ENCODE measurements at regions of chr6 and their contacts with region 1.

Region 1: GRCh38 chr6:88975369-88975768 is 12.0 kb upstream of the RNGTT start:
- DNase-seq: no peak
- H3K4me3 ChIP-seq: no peak overlapping the region
- H3K27ac ChIP-seq: no peak overlapping the region
- H3K4me1 ChIP-seq: no peaks in the 10 kb centered on the region
- H3K27me3 ChIP-seq: no peaks in the 10 kb centered on the region
- CTCF ChIP-seq: no peak

Region 2: DNA sequence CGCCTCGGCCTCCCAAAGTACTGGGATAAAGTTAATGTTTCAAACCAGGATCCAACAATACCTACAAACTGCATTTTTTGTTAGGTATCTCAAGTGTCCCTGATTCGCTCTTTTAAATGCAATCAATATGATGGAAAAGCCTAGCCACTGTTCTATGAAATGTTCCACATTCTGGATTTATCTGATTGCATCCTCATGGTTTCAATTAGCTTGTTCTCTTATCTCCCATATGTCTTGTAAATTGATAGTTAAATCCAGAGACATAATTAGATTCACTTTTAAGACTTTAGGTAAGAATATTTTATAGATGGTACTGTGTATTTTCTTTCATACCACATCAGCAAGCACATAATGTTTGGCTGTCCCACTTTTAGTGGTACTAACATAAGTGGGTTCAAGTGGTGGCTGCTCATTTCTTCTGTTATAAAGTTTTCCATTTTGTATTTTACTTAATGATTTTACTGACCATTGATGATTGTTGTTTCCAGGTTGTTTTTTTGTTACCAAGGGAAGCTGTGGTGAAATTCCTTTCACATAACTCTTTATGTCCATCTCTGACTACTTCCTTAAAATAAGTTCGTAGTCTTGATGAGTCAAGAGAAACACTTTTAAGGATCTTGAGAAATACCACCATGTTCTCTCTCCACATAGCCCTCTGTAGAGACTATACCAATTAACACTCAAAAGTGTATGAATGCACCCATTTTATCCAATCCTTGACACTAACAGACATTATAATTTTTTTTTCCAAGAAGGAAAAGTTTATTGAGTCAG is 52.4 kb before region 1 on chr6:
- intact Hi-C with region 1: no loop called
- DNase-seq: no peak
- H3K4me3 ChIP-seq: no peak overlapping the region
- H3K27ac ChIP-seq: no peak overlapping the region
- H3K4me1 ChIP-seq: no peaks in the 10 kb centered on the region
- H3K27me3 ChIP-seq: no peaks in the 10 kb centered on the region
- CTCF ChIP-seq: no peak

Region 3: GRCh38 chr6:89610149-89610642 is 634.8 kb after region 1 on chr6:
- intact Hi-C with region 1: loop called (anchors 5 kb)
- DNase-seq: peak in 1 of 2 donors; percentile 78
- H3K4me3 ChIP-seq: no peak overlapping the region
- H3K27ac ChIP-seq: no peak overlapping the region
- H3K4me1 ChIP-seq: no peaks in the 10 kb centered on the region
- H3K27me3 ChIP-seq: no peaks in the 10 kb centered on the region
- CTCF ChIP-seq: peak; percentile 67 to 82 (median 73)

Measured in ascending aorta (tissue), 2 donors.